Prostate gland (tissue), 2 donors: ENCODE measurements at regions of chr1 and their contacts with region 1.

Region 1: GRCh38 chr1:24027838-24028468 is 47.8 kb upstream of the SRSF10 start:
- DNase-seq: no peak
- H3K4me3 ChIP-seq: no peak overlapping the region
- H3K27ac ChIP-seq: no peak overlapping the region
- H3K4me1 ChIP-seq: peaks cover under 1% of the 10 kb centered on the region
- H3K27me3 ChIP-seq: no peaks in the 10 kb centered on the region
- CTCF ChIP-seq: peak in 3 of 4 experiments; percentile 62 to 82 (median 75)
- POLR2A ChIP-seq: no peak

Region 2: DNA sequence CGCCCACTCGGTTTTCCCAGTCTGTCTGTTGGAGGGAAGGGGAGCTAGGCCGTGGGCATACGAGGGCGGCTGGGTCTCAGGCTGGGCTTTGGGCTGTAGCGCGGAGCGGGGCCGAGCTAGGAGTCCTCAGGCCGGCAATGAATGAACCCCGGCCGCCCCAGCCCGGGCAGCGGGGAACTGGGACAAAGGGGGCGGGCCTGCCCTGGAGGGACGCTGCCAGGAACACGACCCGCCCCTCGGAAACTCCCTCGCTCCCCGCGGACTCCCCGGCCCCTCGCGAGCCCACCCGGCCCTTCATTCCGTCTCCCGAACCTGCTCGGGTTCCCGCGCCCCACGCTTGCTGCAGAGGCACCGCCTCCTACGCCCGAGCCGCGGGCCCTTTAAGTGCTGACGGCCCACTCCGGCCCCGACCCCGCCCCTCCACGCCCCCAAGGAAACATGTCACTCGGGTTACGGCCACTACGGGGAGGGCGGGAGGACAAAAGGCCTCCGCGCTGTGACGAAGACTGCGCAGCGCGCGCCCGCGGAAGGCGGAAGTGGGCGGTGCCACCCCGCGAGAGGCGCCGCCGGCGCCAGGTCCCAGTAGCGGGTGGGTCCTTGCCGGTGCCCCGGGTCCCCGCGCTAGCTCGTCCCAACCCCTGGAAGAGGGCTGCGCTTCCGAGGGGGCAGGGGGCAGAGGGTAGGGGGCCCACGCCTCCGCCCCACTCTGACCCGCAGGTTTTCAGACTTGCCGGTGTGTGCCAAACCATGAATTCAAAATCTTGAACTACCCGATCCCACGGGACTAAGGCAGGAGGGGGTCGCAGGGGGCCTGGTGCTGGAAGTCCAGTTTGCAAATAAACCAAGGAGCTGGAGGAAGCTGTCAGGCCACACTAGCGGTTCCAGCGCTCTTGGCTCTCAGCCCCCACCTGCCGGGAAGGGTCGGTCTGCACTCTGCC is 227.3 kb before region 1 on chr1 and contains the start of gene GALE:
- intact Hi-C with region 1: loop called (anchors 10 kb)
- DNase-seq: peak; percentile 96
- H3K4me3 ChIP-seq: peak within 1 kb of the TSS; percentile 84 to 87
- H3K27ac ChIP-seq: peak within 1 kb of the TSS; percentile 83 to 87
- H3K4me1 ChIP-seq: peaks cover 12% of the 10 kb centered on the region
- H3K27me3 ChIP-seq: no peaks in the 10 kb centered on the region
- CTCF ChIP-seq: peak in 2 of 4 experiments; percentile 24 to 29
- POLR2A ChIP-seq: peak; percentile 74
- total RNA-seq, gene GALE: 26.3 to 27.3 TPM

Region 3: DNA sequence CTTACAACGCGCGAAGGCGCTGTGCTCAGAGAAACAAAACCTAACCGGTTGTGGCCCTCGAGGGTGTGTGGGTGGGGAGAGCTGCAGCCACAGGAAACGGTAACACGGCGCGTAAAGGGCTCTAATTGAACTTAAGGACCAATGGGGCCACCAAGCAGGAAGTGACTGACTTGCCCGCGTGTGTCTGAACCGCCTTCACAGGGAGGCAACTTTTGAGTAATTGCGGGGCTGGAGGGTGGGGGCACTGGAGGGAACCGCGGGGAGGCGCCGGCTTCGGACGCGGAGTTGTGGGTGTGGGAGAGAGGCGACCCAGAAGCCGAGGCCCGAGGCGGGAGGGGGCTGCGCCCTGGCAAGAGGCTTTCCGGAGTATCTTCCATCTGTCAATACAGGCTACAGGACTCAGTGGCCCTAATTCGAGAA is 68.9 kb before region 1 on chr1:
- intact Hi-C with region 1: loop called (anchors 5 kb)
- DNase-seq: peak; percentile 72
- H3K4me3 ChIP-seq: peak overlapping the region; percentile 59 to 82
- H3K27ac ChIP-seq: peak overlapping the region; percentile 98
- H3K4me1 ChIP-seq: no peaks in the 10 kb centered on the region
- H3K27me3 ChIP-seq: no peaks in the 10 kb centered on the region
- CTCF ChIP-seq: peak in 2 of 4 experiments; percentile 36 to 49
- POLR2A ChIP-seq: peak; percentile 2